Right ventricle myocardium inferior (tissue), 1 donor: ENCODE measurements at regions of chr2 and their contacts with region 1.

Region 1: DNA sequence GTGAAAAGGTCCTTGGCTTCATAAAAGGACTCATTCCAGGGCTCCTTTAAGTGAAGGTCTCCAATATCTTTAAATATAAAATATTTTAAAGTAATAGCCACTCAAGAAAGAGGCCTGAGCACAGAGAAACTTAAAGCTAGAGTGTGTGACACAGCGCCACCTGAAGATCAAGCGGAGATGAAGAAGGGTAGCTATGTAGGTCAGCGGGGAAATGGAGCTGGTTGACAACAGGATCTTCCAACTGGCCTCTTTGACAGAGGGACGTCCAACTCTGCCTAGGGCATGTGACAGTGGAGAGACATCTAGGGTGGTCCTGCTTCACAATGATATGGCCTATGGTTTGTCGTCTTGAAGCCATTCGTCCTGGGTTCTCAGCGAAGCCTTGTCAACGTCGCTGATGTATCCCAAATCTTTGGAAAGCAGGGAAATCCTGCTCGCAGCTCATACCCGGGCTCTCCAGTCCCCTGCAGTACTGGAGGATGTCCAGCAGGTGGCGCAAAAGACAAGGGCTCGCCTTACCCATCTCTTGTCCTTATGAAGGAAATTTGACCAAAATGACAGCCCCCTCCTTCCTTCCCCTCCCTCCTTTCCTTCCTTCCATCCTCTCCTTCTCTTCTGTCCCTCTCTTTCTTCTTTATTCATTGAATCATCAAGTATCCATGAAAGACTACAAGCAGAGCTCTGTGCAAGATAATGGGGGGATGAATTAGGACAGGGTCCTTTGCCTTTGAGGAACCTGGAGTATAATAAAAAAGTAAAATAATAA is 59.6 kb downstream of the LONRF2 start:
- DNase-seq: peak; percentile 84
- ATAC-seq: peak; percentile 78

Region 2: DNA sequence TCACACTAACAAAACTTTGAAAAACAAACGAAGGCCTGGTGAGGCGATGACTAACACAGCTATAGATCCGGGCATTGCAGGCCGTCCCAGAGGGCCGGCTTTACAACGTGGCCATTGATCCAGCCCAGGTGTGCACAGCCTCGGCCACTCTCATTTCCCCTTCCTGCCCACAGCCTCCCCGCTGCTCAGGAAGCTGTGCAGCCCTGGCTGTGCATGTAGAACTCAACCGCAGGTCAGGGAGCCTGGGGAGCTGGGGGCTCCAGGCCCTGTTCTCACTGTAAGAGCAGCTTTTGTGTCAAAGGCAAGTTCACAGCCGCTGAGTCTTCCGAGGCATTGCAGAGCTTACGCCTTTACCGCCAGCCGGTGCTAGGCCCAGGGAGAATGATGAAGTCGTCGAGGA is 27.6 kb before region 1 on chr2:
- intact Hi-C with region 1: no loop called
- DNase-seq: no peak
- ATAC-seq: no peak

Region 3: GRCh38 chr2:100381240-100381639 is 118.5 kb after region 1 on chr2:
- intact Hi-C with region 1: loop called (anchors 2 kb)
- DNase-seq: no peak
- ATAC-seq: peak; percentile 72

Region 4: GRCh38 chr2:100485396-100485795 is 222.7 kb after region 1 on chr2:
- intact Hi-C with region 1: no loop called
- DNase-seq: no peak
- ATAC-seq: no peak

Region 5: DNA sequence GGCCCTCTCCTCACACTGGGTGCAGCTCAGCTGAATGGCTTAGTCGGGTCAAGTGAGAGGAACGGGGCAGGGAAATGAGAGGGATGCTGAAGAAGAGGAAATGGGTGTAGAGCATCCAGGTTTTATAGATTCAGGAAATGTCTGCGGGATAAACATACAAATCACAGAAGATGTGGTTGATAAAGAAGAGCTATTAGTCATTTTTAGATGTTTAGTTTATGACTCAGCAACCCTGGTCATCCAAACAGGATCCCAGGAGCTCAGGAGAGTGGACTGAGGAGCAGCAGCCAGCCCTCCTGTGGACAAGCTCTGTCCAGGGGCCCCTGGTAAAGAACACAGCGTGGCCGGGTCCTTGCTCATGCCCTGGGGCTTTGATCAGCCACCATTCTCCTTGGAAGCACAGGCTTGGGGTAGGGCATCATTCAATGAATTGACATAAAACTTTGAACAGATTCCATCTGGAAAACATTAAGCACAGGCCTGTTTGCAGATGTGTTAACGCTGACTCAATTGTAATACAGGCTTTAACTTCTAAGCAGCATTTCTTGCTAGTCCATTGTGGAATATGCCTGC is 640.2 kb after region 1 on chr2:
- intact Hi-C with region 1: no loop called
- DNase-seq: no peak
- ATAC-seq: no peak